Caco-2 (cell line): ENCODE measurements at regions of chr2 and their contacts with region 1.

Region 1: GRCh38 chr2:23460228-23460627 is 75.2 kb downstream of the KLHL29 start:
- DNase-seq: no peak
- H3K4me3 ChIP-seq: no peak overlapping the region
- H3K4me3 Mint-ChIP-seq: no peak overlapping the region
- H3K27ac Mint-ChIP-seq: no peak overlapping the region
- H3K4me1 ChIP-seq: no peaks in the 10 kb centered on the region
- H3K4me1 Mint-ChIP-seq: no peaks in the 10 kb centered on the region
- H3K27me3 ChIP-seq: no peaks in the 10 kb centered on the region; the same call in none of the 2 replicates
- H3K27me3 Mint-ChIP-seq: peaks cover 2% of the 10 kb centered on the region
- CTCF ChIP-seq: peak; percentile 46 to 54

Region 2: DNA sequence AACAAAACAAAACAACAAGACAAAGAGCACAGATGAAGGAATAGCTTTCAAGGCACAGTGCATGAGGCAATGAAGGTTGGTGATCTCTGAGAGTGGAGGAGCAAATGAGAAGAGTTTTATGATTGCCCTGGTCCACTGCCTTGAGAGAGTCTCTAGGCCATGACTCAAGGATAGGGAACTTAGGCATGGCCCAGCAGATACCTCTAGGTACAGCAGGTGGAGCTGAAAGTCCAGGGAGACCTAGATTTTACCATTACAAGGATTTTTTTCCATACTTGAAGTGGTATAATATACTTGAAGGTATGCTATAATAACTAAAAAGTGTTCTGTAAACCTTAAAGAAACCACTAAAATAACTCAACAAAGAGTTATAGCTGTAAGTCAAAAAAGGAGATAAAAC is 314.8 kb before region 1 on chr2:
- CTCF ChIA-PET with region 1: no interaction called
- POLR2A ChIA-PET with region 1: no interaction called
- intact Hi-C with region 1: loop called (anchors 5 kb)
- DNase-seq: no peak
- H3K4me3 ChIP-seq: no peak overlapping the region
- H3K4me3 Mint-ChIP-seq: no peak overlapping the region
- H3K27ac Mint-ChIP-seq: no peak overlapping the region
- H3K4me1 ChIP-seq: no peaks in the 10 kb centered on the region
- H3K4me1 Mint-ChIP-seq: no peaks in the 10 kb centered on the region
- H3K27me3 ChIP-seq: no peaks in the 10 kb centered on the region
- H3K27me3 Mint-ChIP-seq: peaks cover 5% of the 10 kb centered on the region
- CTCF ChIP-seq: peak in 1 of 2 experiments; percentile 23

Region 3: DNA sequence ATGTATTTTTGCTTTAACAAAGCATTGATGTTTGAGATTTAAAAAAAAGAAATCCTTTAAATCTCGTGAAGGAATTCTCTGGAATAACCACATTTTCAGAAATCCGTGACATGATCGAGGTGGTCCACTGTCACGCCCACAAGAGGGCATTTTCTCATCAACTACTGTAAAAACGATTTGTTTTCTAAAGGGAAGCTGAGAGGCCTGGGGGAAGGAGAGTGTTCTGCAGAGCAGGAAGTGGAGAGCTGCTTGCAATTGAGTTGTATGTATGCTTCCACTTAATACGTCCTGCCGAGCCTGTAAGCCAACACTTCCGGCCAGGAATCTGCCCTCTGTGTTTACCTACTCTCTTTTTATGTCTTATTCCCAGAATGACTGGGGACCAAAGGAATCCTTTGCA is 55.8 kb before region 1 on chr2:
- CTCF ChIA-PET with region 1: no interaction called
- POLR2A ChIA-PET with region 1: no interaction called
- intact Hi-C with region 1: loop called (anchors 5 kb)
- DNase-seq: no peak
- H3K4me3 ChIP-seq: no peak overlapping the region
- H3K4me3 Mint-ChIP-seq: no peak overlapping the region
- H3K27ac Mint-ChIP-seq: no peak overlapping the region
- H3K4me1 ChIP-seq: no peaks in the 10 kb centered on the region
- H3K4me1 Mint-ChIP-seq: no peaks in the 10 kb centered on the region
- H3K27me3 ChIP-seq: no peaks in the 10 kb centered on the region; the same call in 1 of the 2 replicates
- H3K27me3 Mint-ChIP-seq: peaks cover 3% of the 10 kb centered on the region
- CTCF ChIP-seq: peak in 1 of 2 experiments; percentile 7